Left cardiac atrium (tissue), 4 donors: ENCODE measurements at regions of chr20 and their contacts with region 1.

Region 1: GRCh38 chr20:45322952-45323383 is 14.9 kb upstream of the MATN4 start:
- DNase-seq: peak; percentile 61
- ATAC-seq: peak; percentile 77 to 81

Region 2: DNA sequence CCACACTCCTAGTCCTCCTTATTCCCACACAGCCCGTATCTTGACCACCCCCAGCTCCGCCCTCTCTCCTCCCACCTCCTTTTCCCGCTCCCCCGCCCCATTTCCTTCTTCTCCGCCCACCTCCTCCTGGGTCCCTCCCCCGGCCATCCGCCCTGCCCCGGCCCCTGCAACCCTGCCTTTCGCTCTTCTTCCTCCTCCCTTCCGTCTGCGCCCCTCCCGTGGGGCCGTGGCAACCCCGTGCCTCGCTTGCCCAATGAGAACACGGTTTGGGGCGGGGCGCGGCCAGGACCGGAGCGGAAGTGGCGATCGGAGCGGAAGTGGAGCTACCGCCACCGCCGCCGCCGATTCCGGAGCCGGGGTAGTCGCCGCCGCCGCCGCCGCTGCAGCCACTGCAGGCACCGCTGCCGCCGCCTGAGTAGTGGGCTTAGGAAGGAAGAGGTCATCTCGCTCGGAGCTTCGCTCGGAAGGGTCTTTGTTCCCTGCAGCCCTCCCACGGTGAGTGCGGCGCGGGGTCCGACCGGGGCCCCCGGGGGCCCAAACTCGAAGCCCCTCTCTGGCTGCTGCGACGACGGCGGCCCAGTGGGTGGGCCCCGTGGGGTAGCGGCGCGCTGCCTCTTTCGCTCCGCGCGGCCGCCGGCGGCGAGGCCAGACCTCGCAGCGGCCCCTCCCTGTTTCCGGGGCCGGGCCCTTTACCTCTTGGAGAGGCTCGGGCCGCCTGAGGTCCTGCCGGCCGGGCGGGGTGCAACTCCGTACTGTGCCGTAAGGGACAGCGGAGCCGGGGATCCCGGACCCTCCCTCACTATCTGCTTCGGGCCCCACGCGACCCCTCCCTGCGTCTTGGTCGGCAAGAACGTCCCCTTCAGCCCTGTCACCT is 437.3 kb before region 1 on chr20 and contains the start of gene YWHAB:
- intact Hi-C with region 1: no loop called
- DNase-seq: peak; percentile 99
- ATAC-seq: peak; percentile 99
- total RNA-seq, gene YWHAB: 109 to 140 TPM

Region 3: GRCh38 chr20:45095753-45096371 is 227.1 kb before region 1 on chr20:
- intact Hi-C with region 1: no loop called
- DNase-seq: peak; percentile 58
- ATAC-seq: peak; percentile 39 to 55

Region 4: DNA sequence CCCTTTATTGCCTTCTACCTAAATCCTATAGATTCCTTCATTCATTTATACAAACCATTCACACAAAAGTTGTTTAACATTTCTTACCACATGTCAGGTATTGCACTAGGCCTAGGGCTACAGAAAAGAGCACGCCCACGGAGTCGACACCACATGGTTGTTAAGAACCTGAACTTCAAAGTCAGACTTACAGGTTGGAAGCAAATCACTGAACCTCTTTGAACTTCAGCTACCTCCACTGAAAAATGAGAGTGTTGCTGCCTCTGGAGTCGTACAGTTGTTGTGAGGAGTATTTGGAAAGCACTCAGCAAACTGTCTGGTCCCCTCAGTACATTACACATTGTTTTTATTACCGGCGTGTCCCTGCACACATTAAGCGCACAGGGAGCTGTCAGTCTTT is 65.3 kb before region 1 on chr20:
- intact Hi-C with region 1: no loop called
- DNase-seq: no peak
- ATAC-seq: no peak

Region 5: GRCh38 chr20:45436732-45437391 is 113.9 kb after region 1 on chr20:
- intact Hi-C with region 1: loop called in 1 of 2 experiments (anchors 2 kb)
- DNase-seq: peak; percentile 91
- ATAC-seq: peak; percentile 97 to 98

Region 6: DNA sequence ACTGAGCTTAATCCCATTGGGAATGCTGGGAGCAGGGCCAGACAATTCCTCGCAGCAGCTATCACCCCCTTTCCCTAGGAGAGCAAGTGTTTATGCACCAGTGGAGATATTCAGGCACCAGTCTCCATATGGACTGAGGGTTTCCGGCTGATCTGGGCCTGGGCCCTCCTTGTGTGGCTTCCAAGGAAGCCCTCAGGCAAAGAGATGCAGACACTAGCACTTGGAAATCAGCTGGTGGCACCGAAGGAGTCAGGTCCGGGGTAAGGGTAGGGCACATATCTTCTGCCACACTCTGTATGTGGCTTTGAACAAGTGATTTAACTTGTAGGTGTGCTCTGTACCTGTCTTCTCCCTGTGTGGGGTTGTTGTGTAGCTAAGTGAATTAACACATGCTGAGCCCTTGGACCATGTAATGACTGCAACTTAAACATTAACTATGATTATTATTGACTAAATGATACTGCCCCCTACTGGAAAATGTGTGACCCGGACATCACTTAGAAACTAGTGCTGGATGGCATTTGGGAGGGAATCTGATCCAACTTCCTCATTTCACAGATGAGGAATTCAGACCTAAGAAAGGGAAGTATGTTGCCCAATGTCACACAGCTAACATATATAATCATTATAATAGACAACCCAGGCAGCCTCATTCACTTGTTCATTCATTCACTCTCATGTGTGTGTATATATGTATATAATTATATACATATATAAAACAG is 127.3 kb after region 1 on chr20:
- intact Hi-C with region 1: loop called (anchors 1 to 5 kb)
- DNase-seq: no peak
- ATAC-seq: peak in 1 of 2 donors; percentile 36

Region 7: DNA sequence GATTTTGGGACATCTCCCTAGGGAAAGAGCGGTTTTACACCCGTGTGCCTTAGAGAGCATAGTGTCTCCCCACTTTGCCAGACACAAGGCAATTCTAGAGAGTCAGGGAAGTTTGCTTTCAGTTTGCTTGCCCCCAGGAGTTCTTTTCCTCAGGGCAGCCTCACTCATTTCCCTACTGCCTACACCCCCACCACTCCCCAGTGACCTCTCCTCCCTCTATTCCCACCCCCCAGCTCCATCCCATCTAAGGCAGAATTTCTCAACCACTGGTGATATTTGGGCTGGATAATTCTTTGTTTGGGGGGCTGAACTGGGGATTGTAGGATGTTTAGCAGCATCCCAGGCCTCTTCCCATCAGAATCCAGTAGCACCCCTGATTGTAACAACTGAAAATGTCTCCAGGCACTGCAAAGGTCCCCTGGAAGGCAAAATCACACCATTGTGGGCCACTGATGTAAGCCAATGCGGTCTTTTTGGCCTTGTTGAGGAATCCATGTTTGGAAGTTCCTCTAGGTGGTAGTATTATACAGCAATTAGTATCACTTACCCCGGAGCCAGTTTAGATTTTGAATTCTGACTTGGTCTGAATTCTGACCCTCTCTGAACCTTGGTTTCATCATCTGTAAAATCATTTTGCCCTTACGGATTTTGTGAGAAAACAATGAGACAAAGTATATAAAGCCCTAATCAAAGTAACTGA is 222.9 kb after region 1 on chr20:
- intact Hi-C with region 1: no loop called
- DNase-seq: no peak
- ATAC-seq: peak in 1 of 2 donors; percentile 63